Common myeloid progenitor, CD34-positive (primary cell): ENCODE measurements at regions of chr4 and their contacts with region 1.

Region 1: GRCh38 chr4:119493419-119493818 is 135.2 kb downstream of the PDE5A start:
- DNase-seq: peak; percentile 13 to 41 (median 34)
- H3K4me3 ChIP-seq: no peak overlapping the region
- H3K27ac ChIP-seq: no peak overlapping the region
- H3K4me1 ChIP-seq: no peaks in the 10 kb centered on the region
- H3K27me3 ChIP-seq: no peaks in the 10 kb centered on the region

Region 2: GRCh38 chr4:118981839-118982381 is 511.5 kb before region 1 on chr4:
- CTCF ChIA-PET with region 1: interaction called, 11 read pairs
- POLR2A ChIA-PET with region 1: no interaction called
- DNase-seq: peak; percentile 55 to 80 (median 71)
- H3K4me3 ChIP-seq: no peak overlapping the region
- H3K27ac ChIP-seq: no peak overlapping the region
- H3K4me1 ChIP-seq: no peaks in the 10 kb centered on the region
- H3K27me3 ChIP-seq: no peaks in the 10 kb centered on the region

Region 3: DNA sequence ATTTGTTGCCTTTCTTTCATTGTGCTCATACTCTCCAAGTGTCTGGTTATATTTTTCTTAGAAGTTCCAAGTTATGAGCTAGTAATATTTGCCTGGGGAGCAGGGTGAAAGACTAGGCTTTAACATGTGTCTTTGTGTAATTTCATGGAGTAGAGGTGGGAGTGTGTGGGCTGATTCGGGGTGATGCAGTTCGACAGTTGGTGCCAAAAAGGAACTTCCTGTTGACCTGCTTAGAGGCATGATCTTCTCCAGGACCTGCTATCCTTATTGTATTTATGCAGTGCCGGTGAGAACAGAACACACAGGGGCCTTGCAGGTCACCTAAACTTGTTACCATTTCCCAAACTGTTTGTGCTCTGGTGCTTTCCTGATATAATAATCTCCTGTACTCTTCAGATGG is 259.7 kb before region 1 on chr4:
- CTCF ChIA-PET with region 1: no interaction called
- POLR2A ChIA-PET with region 1: no interaction called
- DNase-seq: peak in 2 of 3 donors; percentile 24 to 39
- H3K4me3 ChIP-seq: peak overlapping the region in 1 of 7 experiments; percentile 17
- H3K27ac ChIP-seq: no peak overlapping the region
- H3K4me1 ChIP-seq: peaks cover 4 to 16% (median 12%) of the 10 kb centered on the region in 4 experiments
- H3K27me3 ChIP-seq: no peaks in the 10 kb centered on the region

Region 4: GRCh38 chr4:119314356-119314755 is 179.1 kb before region 1 on chr4:
- CTCF ChIA-PET with region 1: interaction called, 35 read pairs
- POLR2A ChIA-PET with region 1: no interaction called
- DNase-seq: peak; percentile 51 to 66 (median 62)
- H3K4me3 ChIP-seq: no peak overlapping the region
- H3K27ac ChIP-seq: no peak overlapping the region
- H3K4me1 ChIP-seq: no peaks in the 10 kb centered on the region
- H3K27me3 ChIP-seq: peaks cover 0 to 4% (median 0%) of the 10 kb centered on the region in 5 experiments